ENCODE measurements at regions of chr5 and their contacts with region 1.

Region 1: GRCh38 chr5:68369457-68370125 is 154.0 kb downstream of the PIK3R1 start:
- DNase-seq: no peak
- ATAC-seq: no peak

Region 2: GRCh38 chr5:68315679-68316271 is 53.8 kb before region 1 on chr5:
- intact Hi-C with region 1: loop called in 1 of 2 experiments (anchors 10 kb)
- DNase-seq: no peak
- ATAC-seq: no peak

Region 3: DNA sequence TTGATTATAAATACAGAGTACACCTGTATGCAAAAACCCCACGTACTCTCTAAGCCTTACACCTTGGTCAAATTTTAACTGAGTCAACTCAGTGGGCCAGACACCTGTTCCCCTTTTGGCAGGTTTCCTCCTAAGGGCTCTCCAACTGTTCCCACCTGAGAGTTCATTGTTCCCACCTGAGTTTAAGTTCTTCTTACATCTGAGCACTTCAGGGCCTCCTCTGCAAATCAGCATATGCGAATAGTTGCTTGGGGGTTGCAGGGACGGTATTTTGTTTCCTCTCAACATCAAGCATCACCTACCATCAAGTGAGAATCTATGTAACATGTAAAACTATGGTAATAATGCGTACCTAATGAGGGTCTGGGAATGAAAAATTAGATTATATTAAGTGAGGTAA is 145.9 kb after region 1 on chr5:
- intact Hi-C with region 1: no loop called
- DNase-seq: no peak
- ATAC-seq: no peak

Measured in left cardiac atrium (tissue), 4 donors.